Common myeloid progenitor, CD34-positive (primary cell): ENCODE measurements at regions of chr3 and their contacts with region 1.

Region 1: GRCh38 chr3:123328851-123329635 is 119.8 kb downstream of the ADCY5 start:
- DNase-seq: peak; percentile 45 to 72 (median 65)
- H3K4me3 ChIP-seq: no peak overlapping the region
- H3K27ac ChIP-seq: no peak overlapping the region
- H3K4me1 ChIP-seq: no peaks in the 10 kb centered on the region
- H3K27me3 ChIP-seq: peaks cover 0 to 9% (median 3%) of the 10 kb centered on the region in 5 experiments

Region 2: GRCh38 chr3:123282461-123282860 is 46.6 kb before region 1 on chr3:
- CTCF ChIA-PET with region 1: no interaction called
- POLR2A ChIA-PET with region 1: no interaction called
- DNase-seq: no peak
- H3K4me3 ChIP-seq: no peak overlapping the region
- H3K27ac ChIP-seq: no peak overlapping the region
- H3K4me1 ChIP-seq: no peaks in the 10 kb centered on the region
- H3K27me3 ChIP-seq: no peaks in the 10 kb centered on the region

Region 3: GRCh38 chr3:123444023-123444422 is 115.0 kb after region 1 on chr3:
- CTCF ChIA-PET with region 1: no interaction called
- POLR2A ChIA-PET with region 1: no interaction called
- DNase-seq: peak in 2 of 3 donors; percentile 26 to 34
- H3K4me3 ChIP-seq: no peak overlapping the region
- H3K27ac ChIP-seq: no peak overlapping the region
- H3K4me1 ChIP-seq: peaks cover 0 to 12% (median 10%) of the 10 kb centered on the region in 4 experiments
- H3K27me3 ChIP-seq: peaks cover 7 to 59% (median 29%) of the 10 kb centered on the region in 5 experiments

Region 4: DNA sequence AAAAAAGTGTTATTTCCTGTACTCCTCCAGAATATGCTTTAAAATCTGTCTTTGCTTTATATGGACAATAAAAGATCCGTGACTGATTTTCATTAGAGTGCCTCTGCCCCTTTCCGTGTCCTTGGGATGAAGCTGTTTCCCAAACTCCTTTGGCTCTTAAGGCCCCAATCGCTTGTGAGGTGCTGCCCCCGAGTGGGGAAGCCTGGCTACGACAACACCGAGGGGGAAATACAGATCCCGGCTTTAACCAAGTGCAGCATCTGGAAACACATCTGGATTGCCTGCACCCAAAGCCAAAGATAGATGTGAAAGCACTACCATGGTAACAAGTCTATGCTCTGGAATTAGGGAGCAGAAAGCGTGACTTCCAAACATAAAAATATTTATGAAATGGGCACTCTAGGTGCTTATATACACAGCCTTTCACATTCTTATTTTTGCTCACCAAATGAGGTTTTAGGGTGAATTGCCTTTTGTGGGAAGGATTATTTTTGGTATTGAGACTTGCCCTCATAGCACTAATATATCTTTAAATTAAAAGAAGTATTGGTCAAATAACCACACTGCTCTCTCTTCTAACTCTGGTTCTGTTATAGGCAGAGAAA is 160.5 kb after region 1 on chr3:
- CTCF ChIA-PET with region 1: interaction called, 24 read pairs
- POLR2A ChIA-PET with region 1: no interaction called
- DNase-seq: peak; percentile 38 to 63 (median 52)
- H3K4me3 ChIP-seq: no peak overlapping the region
- H3K27ac ChIP-seq: no peak overlapping the region
- H3K4me1 ChIP-seq: no peaks in the 10 kb centered on the region
- H3K27me3 ChIP-seq: peaks cover 0 to 4% (median 2%) of the 10 kb centered on the region in 5 experiments

Region 5: DNA sequence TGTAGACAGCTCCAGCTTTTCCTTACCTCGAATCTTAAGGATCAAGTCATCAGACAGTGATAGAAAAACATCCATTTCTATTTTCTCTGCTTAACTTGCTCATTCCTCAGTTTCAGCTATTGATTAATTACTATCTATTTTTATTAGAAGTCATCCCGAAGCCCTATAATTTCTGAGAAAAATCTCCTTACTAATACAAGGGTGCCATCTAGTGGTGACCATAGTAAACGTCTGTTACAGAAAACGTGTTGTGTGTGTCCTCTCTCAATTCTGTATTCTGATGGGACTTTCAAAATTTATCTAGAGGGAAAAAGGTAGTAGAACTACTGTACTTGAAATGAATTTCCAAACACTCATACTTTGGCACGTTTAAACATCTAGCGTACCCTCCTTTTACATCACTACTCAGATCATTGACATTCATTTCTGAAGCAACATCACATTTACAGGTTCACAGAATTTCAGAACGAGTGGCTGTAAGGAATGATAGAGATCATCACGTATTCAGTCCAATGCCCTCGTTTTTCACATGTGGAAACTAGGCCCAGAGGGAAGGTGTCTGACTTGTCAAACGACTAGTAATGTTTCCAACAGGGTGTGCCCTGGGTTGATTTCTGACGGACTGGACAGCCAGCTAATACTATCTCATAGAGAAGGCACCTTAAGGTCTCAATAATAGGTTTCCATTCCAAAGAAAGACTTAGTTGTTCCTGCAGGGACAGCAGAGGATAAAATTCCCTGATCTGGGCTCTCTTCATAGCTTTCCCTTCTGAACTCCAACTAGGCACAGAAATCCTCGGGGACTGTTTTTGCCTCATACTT is 230.2 kb after region 1 on chr3:
- CTCF ChIA-PET with region 1: interaction called, 27 read pairs
- POLR2A ChIA-PET with region 1: no interaction called
- DNase-seq: peak; percentile 52 to 70 (median 62)
- H3K4me3 ChIP-seq: no peak overlapping the region
- H3K27ac ChIP-seq: no peak overlapping the region
- H3K4me1 ChIP-seq: no peaks in the 10 kb centered on the region
- H3K27me3 ChIP-seq: no peaks in the 10 kb centered on the region